HepG2 (cell line): ENCODE measurements at regions of chr12 and their contacts with region 1.

Region 1: DNA sequence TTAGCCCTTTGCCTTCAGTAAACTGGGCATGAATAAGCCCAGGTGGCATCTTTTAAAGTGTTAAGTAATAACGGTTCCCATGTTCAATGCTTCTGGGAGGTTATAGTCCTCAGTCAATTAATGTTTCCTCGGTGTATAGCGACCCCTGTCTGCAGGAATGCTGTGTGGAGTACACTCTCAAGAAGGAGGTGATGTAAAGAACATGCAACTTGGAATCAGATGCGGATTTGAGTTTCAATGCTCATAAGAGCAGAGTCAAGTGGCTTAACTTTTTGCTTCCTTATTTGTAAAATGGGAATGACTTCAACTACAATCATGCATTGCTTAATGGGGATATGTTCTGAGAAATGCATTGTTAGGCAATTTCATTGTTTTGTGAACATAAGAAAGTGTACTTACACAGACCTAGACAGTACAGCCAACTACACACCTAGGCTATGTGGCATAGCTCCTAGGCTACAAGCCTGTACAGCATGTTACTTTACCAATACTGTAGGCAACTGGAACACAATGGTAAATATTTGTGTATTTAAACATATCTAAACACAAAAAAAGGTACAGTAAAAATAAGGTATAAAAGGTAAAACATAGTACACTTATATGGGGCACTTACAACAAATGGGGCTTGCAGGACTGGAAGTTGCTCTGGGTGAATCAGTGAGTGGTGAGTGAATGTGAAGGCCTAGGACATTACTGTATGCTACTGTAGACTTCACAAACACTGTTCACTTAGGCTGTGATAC is 6.8 kb upstream of the MRPS35 start:
- DNase-seq: peak; percentile 75
- ATAC-seq: peak; percentile 75
- H3K4me3 ChIP-seq: no peak overlapping the region
- H3K27ac ChIP-seq: no peak overlapping the region
- H3K4me1 ChIP-seq: peaks cover 29% of the 10 kb centered on the region
- H3K27me3 ChIP-seq: 0 out of 5 replicates have a peak, but pooled peaks cover 0 to 3% of the 10 kb centered on the region in 2 experiments
- CTCF ChIP-seq: peak; percentile 88
- EP300 ChIP-seq: no peak
- POLR2A ChIP-seq: no peak
- RAD21 ChIP-seq: peak; percentile 46; the same call in 1 of the 2 replicates

Region 2: GRCh38 chr12:27424631-27425230 is 279.1 kb before region 1 on chr12:
- CTCF ChIA-PET with region 1: interaction called, 5 read pairs
- POLR2A ChIA-PET with region 1: no interaction called
- in situ Hi-C with region 1: no loop called
- intact Hi-C with region 1: loop called (anchors 2 kb)
- DNase-seq: peak; percentile 45
- ATAC-seq: peak; percentile 78
- H3K4me3 ChIP-seq: no peak overlapping the region
- H3K27ac ChIP-seq: no peak overlapping the region
- H3K4me1 ChIP-seq: no peaks in the 10 kb centered on the region
- H3K27me3 ChIP-seq: no peaks in the 10 kb centered on the region
- CTCF ChIP-seq: peak; percentile 50
- EP300 ChIP-seq: no peak
- POLR2A ChIP-seq: no peak
- RAD21 ChIP-seq: no peak

Region 3: GRCh38 chr12:27434673-27435565 is 269.0 kb before region 1 on chr12:
- CTCF ChIA-PET with region 1: interaction called, 3 read pairs
- POLR2A ChIA-PET with region 1: no interaction called
- in situ Hi-C with region 1: no loop called
- intact Hi-C with region 1: loop called (anchors 5 kb)
- DNase-seq: no peak
- ATAC-seq: peak; percentile 61
- H3K4me3 ChIP-seq: no peak overlapping the region
- H3K27ac ChIP-seq: no peak overlapping the region
- H3K4me1 ChIP-seq: peaks cover 10% of the 10 kb centered on the region
- H3K27me3 ChIP-seq: no peaks in the 10 kb centered on the region
- CTCF ChIP-seq: peak; percentile 39
- EP300 ChIP-seq: no peak
- POLR2A ChIP-seq: no peak
- RAD21 ChIP-seq: no peak

Region 4: GRCh38 chr12:27523642-27524493 is 180.0 kb before region 1 on chr12 and contains the start of gene PPFIBP1:
- CTCF ChIA-PET with region 1: no interaction called
- POLR2A ChIA-PET with region 1: interaction called, 3 read pairs
- in situ Hi-C with region 1: no loop called
- intact Hi-C with region 1: loop called (anchors 10 kb)
- DNase-seq: peak; percentile 96
- ATAC-seq: peak; percentile 99
- H3K4me3 ChIP-seq: peak within 1 kb of the TSS; percentile 74 to 97 (median 93)
- H3K27ac ChIP-seq: peak within 1 kb of the TSS; percentile 82
- H3K4me1 ChIP-seq: peaks cover 33% of the 10 kb centered on the region
- H3K27me3 ChIP-seq: no peaks in the 10 kb centered on the region; a peak in 1 of 5 replicates
- CTCF ChIP-seq: peak; percentile 48
- EP300 ChIP-seq: no peak
- POLR2A ChIP-seq: peak; percentile 89 to 92
- RAD21 ChIP-seq: peak; percentile 54
- total RNA-seq, gene PPFIBP1: 21.8 and 32.0 TPM in 2 replicates

Region 5: GRCh38 chr12:27549801-27550652 is 153.9 kb before region 1 on chr12:
- CTCF ChIA-PET with region 1: no interaction called
- POLR2A ChIA-PET with region 1: no interaction called
- in situ Hi-C with region 1: no loop called
- intact Hi-C with region 1: loop called (anchors 10 kb)
- DNase-seq: peak; percentile 99
- ATAC-seq: peak; percentile 92
- H3K4me3 ChIP-seq: peak overlapping the region; percentile 21 to 57 (median 54); a peak in 5 of 6 replicates
- H3K27ac ChIP-seq: peak overlapping the region; percentile 86
- H3K4me1 ChIP-seq: peaks cover 87% of the 10 kb centered on the region
- H3K27me3 ChIP-seq: no peaks in the 10 kb centered on the region
- CTCF ChIP-seq: no peak; the same call in 1 of the 2 replicates
- EP300 ChIP-seq: peak; percentile 91 to 92; a peak in 3 of 4 replicates
- POLR2A ChIP-seq: peak in 1 of 2 experiments; percentile 46; a peak in 1 of 4 replicates
- RAD21 ChIP-seq: 0 out of 2 replicates have a peak, but pooled peaks have one; percentile 7

Region 6: GRCh38 chr12:27652174-27652763 is 51.6 kb before region 1 on chr12:
- CTCF ChIA-PET with region 1: interaction called, 14 read pairs
- POLR2A ChIA-PET with region 1: no interaction called
- in situ Hi-C with region 1: no loop called
- intact Hi-C with region 1: loop called (anchors 1 kb)
- DNase-seq: peak; percentile 71
- ATAC-seq: peak; percentile 74
- H3K4me3 ChIP-seq: no peak overlapping the region
- H3K27ac ChIP-seq: no peak overlapping the region
- H3K4me1 ChIP-seq: no peaks in the 10 kb centered on the region
- H3K27me3 ChIP-seq: no peaks in the 10 kb centered on the region
- CTCF ChIP-seq: peak; percentile 80
- EP300 ChIP-seq: no peak
- POLR2A ChIP-seq: no peak
- RAD21 ChIP-seq: peak; percentile 23; the same call in 1 of the 2 replicates

Region 7: DNA sequence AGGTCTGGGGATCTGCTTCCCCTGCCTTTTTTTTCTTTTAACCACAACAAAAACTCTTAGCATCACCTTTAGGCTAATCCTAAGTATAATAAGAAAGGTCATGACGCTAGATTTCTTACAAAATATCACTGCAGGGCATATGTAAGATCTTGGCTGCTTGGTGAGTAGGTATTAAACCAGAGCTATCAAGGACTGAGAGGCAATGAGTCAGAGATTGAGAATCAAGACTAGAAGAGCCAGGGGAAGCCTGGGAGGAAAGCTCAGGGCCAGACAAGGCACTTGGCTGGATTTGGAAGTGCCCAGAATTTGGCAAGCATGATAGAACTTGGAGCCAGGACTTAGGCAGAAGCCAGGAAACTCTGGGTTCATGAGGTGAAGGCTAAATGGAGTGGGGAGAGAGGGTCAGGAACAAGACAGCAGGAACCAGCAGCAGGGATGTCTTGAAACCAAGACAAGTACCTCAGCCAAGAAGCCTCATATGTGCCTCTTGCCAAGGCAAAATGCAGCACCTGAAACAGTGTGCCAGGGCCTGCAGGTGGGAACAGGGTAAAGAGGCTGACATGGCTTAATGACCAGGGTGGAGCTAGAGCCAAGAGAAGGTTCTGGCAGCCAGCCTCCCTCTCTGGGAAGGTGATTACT is 218.7 kb after region 1 on chr12:
- CTCF ChIA-PET with region 1: no interaction called
- POLR2A ChIA-PET with region 1: no interaction called
- in situ Hi-C with region 1: no loop called
- intact Hi-C with region 1: no loop called
- DNase-seq: no peak
- ATAC-seq: no peak
- H3K4me3 ChIP-seq: no peak overlapping the region
- H3K27ac ChIP-seq: no peak overlapping the region
- H3K4me1 ChIP-seq: peaks cover 2% of the 10 kb centered on the region; the same call in 1 of the 2 replicates
- H3K27me3 ChIP-seq: no peaks in the 10 kb centered on the region; a peak in 1 of 5 replicates
- CTCF ChIP-seq: no peak
- EP300 ChIP-seq: no peak
- POLR2A ChIP-seq: no peak
- RAD21 ChIP-seq: no peak